ENCODE measurements at regions of chr7 and their contacts with region 1.

Region 1: GRCh38 chr7:106285051-106285854 is 470 bp upstream of the NAMPT start:
- DNase-seq: peak; percentile 100
- H3K4me3 Mint-ChIP-seq: peak overlapping the region; percentile 92
- H3K27ac Mint-ChIP-seq: peak overlapping the region; percentile 99
- H3K4me1 Mint-ChIP-seq: peaks cover 50% of the 10 kb centered on the region
- H3K27me3 Mint-ChIP-seq: peaks cover 2% of the 10 kb centered on the region

Region 2: DNA sequence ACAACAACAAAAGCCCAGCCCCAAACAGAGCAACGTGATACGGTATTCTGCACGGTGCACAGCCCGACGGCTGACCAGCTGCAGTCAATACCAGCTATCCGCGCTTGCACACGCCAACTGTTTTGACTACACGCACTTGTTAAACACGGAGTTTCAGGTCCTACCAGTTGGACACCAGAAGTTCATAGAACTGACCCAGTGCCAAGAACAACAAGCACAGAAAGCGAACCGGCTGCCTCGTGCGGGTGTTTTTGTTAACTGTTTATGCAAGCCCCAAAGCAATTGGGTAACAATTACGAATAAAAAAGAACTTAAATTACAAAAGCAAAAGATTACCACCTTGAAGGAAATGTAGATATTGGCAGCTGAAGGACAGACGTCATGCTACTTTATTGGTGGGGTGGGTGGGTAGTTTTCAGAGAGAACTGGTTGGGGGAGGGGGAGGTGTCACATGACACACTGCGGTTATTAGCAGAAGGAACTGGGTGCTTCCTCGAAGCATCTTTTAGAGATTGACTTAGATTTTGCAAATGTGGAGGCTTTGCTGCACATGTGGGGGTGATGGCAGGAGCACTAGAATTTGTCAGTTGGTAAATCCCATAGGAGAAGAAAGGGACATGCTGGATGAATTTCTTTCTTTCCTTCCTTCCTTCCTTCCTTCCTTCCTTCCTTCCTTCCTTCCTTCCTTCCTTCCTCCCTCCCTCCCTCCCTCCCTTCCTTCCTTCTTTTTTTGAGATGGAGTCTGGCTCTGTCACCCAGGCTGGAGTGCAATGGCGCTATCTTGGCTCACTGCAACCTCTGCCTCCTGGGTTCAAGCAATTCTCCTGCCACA is 593.3 kb before region 1 on chr7:
- CTCF ChIA-PET with region 1: no interaction called
- POLR2A ChIA-PET with region 1: no interaction called
- intact Hi-C with region 1: no loop called
- DNase-seq: peak; percentile 78
- H3K4me3 Mint-ChIP-seq: peak overlapping the region; percentile 78
- H3K27ac Mint-ChIP-seq: peak overlapping the region; percentile 76
- H3K4me1 Mint-ChIP-seq: peaks cover 47% of the 10 kb centered on the region
- H3K27me3 Mint-ChIP-seq: no peaks in the 10 kb centered on the region

Region 3: GRCh38 chr7:106089647-106090046 is 195.6 kb before region 1 on chr7:
- CTCF ChIA-PET with region 1: no interaction called
- POLR2A ChIA-PET with region 1: no interaction called
- intact Hi-C with region 1: no loop called
- DNase-seq: no peak
- H3K4me3 Mint-ChIP-seq: no peak overlapping the region
- H3K27ac Mint-ChIP-seq: no peak overlapping the region
- H3K4me1 Mint-ChIP-seq: no peaks in the 10 kb centered on the region
- H3K27me3 Mint-ChIP-seq: no peaks in the 10 kb centered on the region

Region 4: GRCh38 chr7:106243893-106244292 is 41.4 kb before region 1 on chr7:
- CTCF ChIA-PET with region 1: no interaction called
- POLR2A ChIA-PET with region 1: no interaction called
- intact Hi-C with region 1: no loop called
- DNase-seq: no peak
- H3K4me3 Mint-ChIP-seq: no peak overlapping the region
- H3K27ac Mint-ChIP-seq: no peak overlapping the region
- H3K4me1 Mint-ChIP-seq: no peaks in the 10 kb centered on the region
- H3K27me3 Mint-ChIP-seq: no peaks in the 10 kb centered on the region

Region 5: DNA sequence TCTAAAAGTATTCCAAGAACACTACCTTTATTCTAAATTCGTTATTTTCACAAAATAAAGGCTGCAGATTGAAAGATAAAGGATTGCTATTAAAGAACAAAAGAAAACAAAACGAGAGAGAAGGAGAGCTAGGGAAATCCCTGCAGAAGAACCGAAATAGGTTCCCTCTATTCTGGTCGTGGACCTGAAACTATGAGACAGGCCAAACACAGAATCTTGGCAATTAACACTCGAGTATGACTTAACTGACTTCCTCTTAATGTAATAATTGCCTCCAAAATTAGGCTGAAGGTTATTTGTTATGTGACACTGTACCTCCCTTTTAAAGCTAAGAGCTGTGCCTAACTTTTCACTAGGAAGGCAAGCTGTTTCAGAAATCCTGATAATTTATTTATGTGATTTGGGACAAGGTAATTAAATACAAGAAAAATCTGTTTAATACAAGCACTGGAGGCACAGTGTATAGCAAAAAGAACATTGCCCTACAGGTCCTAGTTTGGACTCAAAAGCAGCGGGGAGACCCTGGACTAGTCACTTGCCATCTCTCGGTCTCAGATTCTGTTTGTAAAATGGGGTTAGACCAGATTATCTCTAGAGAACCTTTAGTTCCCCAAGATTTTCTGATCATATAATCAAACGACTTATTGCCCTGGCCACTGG is 12.1 kb before region 1 on chr7:
- CTCF ChIA-PET with region 1: interaction called, 3 read pairs
- POLR2A ChIA-PET with region 1: interaction called, 13 read pairs
- intact Hi-C with region 1: no loop called
- DNase-seq: no peak
- H3K4me3 Mint-ChIP-seq: no peak overlapping the region
- H3K27ac Mint-ChIP-seq: peak overlapping the region; percentile 13
- H3K4me1 Mint-ChIP-seq: peaks cover 35% of the 10 kb centered on the region
- H3K27me3 Mint-ChIP-seq: no peaks in the 10 kb centered on the region

Region 6: DNA sequence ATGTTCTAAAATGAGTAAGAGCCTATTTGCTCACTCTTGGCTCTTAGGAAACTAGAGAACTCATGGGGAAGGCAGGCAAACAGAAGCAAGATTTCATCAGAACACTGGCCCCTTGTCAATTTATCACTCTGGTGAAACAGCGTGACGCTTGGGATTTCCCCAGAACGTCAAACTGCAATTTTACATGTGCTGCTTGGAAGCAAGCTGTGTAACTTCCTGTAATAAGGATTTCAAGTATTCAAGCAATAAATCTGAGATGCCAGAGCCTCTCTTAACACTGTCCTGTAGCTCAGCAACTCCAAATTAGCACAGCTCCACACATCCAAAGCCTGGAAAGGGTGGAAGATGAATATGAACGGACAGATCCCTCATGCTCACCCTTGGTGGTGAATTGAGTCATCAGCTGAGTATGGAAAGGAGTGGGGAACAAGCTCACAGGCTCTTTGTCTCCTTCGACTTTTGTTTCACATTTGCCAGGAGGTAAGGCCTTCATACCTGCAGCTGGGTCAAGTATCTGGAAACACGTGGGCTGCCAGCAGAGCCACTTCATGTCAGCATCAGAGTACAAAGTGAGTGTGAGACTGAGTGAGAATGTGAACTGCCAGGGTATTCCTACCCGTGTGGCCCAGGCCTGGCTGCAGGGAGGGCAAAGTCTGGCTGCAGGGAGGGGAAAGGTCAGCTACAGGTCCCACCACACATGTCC is 139.9 kb after region 1 on chr7:
- CTCF ChIA-PET with region 1: interaction called, 7 read pairs
- POLR2A ChIA-PET with region 1: interaction called, 56 read pairs
- intact Hi-C with region 1: loop called (anchors 1 kb)
- DNase-seq: peak; percentile 91
- H3K4me3 Mint-ChIP-seq: peak overlapping the region; percentile 65
- H3K27ac Mint-ChIP-seq: peak overlapping the region; percentile 97
- H3K4me1 Mint-ChIP-seq: peaks cover 81% of the 10 kb centered on the region
- H3K27me3 Mint-ChIP-seq: no peaks in the 10 kb centered on the region

Region 7: DNA sequence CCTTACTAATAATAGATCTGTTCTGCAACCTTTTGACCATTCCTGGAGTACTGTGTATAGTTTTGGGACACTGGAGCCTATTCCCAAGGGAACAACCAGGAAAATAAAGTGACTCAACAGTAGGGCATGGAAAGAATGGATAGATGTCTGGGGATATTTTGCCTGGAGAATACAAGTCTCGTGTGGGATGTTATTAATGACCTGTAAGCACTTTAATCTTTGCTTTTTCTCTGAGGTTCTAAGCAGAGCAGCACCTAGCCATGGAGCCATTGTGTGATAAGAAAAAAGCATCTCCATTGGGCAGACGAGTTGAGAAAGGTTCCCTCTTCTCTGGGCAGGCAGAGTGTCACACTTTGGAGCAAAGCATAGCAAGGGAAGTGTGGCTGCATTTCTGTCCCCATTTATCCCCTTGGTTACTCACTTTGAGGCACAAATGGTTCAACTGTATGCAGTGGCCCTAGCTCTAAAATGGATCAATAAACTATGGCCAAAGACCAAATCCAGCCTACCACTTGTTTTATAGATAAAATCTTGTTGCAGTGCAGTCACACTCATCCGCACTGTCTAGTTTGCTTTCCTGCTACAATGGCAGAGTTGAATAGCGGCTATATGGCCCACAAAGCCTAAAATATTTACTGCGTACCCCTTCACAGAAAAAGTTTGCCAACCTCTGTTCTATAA is 396.7 kb after region 1 on chr7:
- CTCF ChIA-PET with region 1: no interaction called
- POLR2A ChIA-PET with region 1: no interaction called
- intact Hi-C with region 1: no loop called
- DNase-seq: no peak
- H3K4me3 Mint-ChIP-seq: no peak overlapping the region
- H3K27ac Mint-ChIP-seq: no peak overlapping the region
- H3K4me1 Mint-ChIP-seq: peaks cover 13% of the 10 kb centered on the region
- H3K27me3 Mint-ChIP-seq: no peaks in the 10 kb centered on the region

Measured in activated CD4-positive, alpha-beta memory T cell treated with anti-CD3 and anti-CD28 coated beads for 36 hours (primary cell).